Activated T-helper 1 cell treated with anti-CD3 and anti-CD28 coated beads, Interleukin-12 subunit alpha, Interleukin-12 subunit beta, Interleukin-2, Interleukin-4 antibody, amounts not matched to agents 30 ng/mL and 10 ng/mL and 1 ng/mL, durations not matched to agents 14 hours and 24 hours and 36 hours (primary cell): ENCODE measurements at regions of chr7 and their contacts with region 1.

Region 1: DNA sequence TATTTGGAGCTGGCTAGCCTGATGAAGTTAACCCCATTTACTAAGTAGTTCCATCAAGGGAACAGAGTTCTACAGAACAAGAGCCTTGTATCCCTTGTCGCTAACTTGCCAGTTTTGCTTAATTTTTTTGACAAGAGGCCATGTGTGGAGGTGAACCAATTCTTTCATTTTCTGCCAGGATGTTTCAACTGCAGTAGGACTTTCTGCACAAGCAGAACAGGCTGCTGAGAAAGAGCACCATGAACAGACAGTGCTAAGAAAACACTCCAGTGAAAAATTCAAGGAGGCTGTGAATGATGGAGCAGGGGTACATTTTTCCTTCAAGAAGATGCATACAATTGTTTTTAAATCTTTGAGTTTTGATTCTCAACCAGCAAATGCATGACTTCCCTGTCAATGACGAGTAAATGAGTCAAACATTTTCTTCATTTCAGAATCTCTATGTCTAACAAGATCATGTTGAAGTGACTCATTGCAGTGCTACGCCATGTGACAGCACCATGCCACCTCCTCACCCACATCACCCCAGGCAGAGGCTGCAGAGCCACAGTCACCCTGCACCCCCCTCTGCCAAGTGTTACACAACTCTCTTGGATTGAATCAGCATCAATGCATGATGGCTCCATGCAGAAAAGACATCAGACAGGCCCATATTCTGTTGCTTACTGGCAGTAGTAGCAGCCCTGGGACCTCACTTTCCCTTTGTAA is 193.1 kb downstream of the COBL start:
- DNase-seq: peak; percentile 52
- H3K4me3 Mint-ChIP-seq: no peak overlapping the region
- H3K27ac Mint-ChIP-seq: peak overlapping the region; percentile 84
- H3K4me1 Mint-ChIP-seq: peaks cover 31% of the 10 kb centered on the region
- H3K27me3 Mint-ChIP-seq: no peaks in the 10 kb centered on the region

Region 2: DNA sequence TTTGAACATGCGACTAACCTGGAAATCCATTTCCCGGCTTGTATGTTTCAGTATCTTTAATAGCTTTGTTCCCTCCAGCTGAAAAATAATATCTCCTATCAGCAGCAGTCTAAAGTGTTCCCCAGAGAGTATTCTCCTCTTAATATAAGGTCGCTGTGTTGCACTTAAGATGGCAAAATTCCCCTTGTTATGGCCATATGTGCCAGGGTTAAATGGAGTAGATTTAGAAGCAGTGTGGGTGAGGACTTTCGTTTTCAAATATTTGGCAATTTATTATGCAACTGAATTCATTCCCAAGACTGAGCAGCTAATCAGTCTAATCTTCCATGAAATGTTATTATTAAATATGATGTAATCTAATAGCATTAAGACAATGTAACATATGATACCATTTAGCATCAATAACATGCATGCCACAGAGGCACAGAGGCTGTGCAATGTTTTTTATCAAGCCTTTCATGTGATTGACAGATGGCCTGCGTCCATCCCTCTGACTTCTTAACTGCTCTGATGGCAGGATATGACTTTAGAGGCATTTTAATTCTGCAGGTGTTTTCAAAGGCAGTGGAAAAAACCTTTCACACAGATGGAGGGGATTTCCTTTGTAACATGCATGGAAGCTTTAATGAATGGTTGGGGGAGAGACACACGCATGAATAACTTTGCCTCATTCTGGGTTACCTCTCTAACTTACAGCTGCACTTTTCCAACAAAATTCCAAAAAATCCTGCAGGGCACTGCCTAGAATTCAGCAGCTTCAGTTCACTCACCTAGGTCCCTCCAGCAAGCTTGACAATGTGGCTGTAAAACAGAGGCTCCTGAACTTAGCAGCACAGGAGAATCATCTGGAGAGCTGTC is 975.3 kb before region 1 on chr7:
- intact Hi-C with region 1: loop called (anchors 5 kb)
- DNase-seq: peak; percentile 17
- H3K4me3 Mint-ChIP-seq: no peak overlapping the region
- H3K27ac Mint-ChIP-seq: peak overlapping the region; percentile 83
- H3K4me1 Mint-ChIP-seq: peaks cover 70% of the 10 kb centered on the region
- H3K27me3 Mint-ChIP-seq: no peaks in the 10 kb centered on the region

Region 3: GRCh38 chr7:50595491-50596102 is 527.9 kb before region 1 on chr7:
- intact Hi-C with region 1: loop called (anchors 5 kb)
- DNase-seq: no peak
- H3K4me3 Mint-ChIP-seq: no peak overlapping the region
- H3K27ac Mint-ChIP-seq: no peak overlapping the region
- H3K4me1 Mint-ChIP-seq: peaks cover 20% of the 10 kb centered on the region
- H3K27me3 Mint-ChIP-seq: peaks cover 15% of the 10 kb centered on the region

Region 4: DNA sequence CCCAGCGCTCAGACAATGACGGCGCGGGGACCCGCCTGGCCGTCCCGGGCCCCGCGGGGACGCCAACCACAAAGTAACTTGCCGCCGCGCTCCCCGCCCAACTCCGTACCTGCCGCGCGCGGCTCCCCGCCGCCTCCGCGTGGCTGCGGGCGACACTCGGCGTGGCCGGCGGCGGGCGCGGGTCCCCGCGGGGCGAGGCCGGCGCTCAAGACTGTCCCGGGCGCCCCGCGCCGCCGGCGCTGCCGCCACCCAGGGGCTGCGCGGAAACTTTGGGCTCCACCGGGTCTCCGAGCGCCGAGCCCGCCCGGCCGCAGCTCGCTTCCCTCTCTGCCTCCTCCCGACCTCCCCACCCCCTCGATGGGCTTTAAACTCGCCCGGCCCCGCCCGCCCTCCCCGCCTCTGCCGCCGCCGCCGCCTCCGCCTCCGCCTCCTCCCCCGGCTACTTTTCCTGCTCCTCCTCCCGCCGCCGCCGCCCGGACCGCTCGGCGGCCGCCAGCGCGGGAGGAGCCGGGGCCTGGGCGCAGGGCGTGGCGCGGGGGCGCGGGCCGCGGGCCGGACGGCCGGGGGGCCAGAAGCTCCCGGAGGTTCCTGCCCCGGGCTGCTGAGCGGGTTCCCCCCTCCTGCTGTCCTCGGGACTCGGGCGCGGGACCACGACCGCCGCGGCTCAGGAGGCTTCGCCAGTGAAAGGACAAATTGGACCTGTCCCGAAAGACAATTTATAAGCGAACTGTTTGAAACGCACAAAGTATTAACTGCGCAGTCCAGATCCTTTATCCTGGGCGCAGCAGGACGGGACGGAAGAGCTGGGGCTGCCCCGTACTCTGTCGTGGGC is 330.1 kb before region 1 on chr7:
- intact Hi-C with region 1: loop called (anchors 5 kb)
- DNase-seq: peak; percentile 9
- H3K4me3 Mint-ChIP-seq: peak overlapping the region; percentile 67
- H3K27ac Mint-ChIP-seq: no peak overlapping the region
- H3K4me1 Mint-ChIP-seq: peaks cover 13% of the 10 kb centered on the region
- H3K27me3 Mint-ChIP-seq: peaks cover 76% of the 10 kb centered on the region

Region 5: DNA sequence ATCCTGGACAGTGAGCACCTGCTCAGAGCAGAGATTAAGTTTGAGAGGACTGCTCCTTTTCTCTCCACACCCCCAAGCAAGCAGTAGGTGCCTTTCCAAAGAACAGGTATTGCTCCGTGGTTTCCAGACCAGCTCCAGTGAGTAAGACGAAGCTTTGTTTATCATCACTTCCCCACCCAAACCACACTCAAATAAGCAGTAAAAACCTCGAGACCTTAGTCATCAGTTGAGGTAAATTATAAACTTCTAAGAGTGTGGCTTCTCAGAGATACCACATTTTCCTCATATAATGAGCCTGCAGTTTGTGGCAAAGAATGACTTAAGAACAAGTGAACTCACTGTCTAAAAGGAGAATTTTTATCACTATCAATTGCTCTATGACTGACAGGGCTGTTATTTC is 290.7 kb before region 1 on chr7:
- intact Hi-C with region 1: loop called (anchors 1 kb)
- DNase-seq: peak; percentile 42
- H3K4me3 Mint-ChIP-seq: peak overlapping the region; percentile 45
- H3K27ac Mint-ChIP-seq: peak overlapping the region; percentile 30
- H3K4me1 Mint-ChIP-seq: peaks cover 45% of the 10 kb centered on the region
- H3K27me3 Mint-ChIP-seq: peaks cover 21% of the 10 kb centered on the region